Activated CD8-positive, alpha-beta T cell treated with anti-CD3 and anti-CD28 coated beads, Interleukin-2, amount 10 ng/mL, durations not matched to agents 7 days and 5 days (primary cell): ENCODE measurements at regions of chr1 and their contacts with region 1.

Region 1: DNA sequence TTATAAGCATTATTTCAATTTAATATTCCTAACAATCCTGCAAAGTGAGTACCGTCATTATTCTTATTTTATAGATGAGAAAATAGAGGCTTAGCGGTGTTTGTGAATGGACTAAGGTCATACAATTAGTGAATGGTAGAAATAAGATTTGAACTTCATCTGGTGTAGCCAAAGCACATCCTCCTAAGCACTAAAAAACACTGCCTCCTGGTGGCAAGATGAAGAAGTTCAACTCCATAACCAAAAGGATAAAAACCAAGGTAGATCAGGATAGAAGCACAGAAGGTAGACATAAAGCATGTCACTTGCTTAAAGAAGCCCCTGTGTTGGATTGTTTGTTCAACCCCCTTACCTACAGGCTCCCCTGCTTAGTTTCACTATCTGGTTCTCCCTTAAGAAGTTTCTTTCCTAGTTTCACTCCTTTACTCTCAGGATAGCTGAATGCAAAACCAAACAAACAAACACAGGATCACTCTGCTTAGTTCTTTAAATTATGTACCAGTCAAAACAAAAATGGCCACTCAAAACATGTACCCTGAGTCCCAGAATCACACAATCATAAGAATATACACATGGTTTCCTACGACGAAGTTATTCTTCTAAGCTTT is 12.7 kb upstream of the AIM2 start:
- DNase-seq: peak; percentile 32
- ATAC-seq: peak; percentile 41
- H3K4me3 Mint-ChIP-seq: no peak overlapping the region
- H3K27ac Mint-ChIP-seq: no peak overlapping the region
- H3K4me1 Mint-ChIP-seq: peaks cover 31% of the 10 kb centered on the region
- H3K27me3 Mint-ChIP-seq: peaks cover 3% of the 10 kb centered on the region

Region 2: GRCh38 chr1:159077120-159077961 is 11.9 kb before region 1 on chr1:
- CTCF ChIA-PET with region 1: interaction called, 55 read pairs
- POLR2A ChIA-PET with region 1: interaction called, 12 read pairs
- DNase-seq: peak; percentile 94
- ATAC-seq: peak; percentile 90
- H3K4me3 Mint-ChIP-seq: peak overlapping the region; percentile 75
- H3K27ac Mint-ChIP-seq: peak overlapping the region; percentile 97
- H3K4me1 Mint-ChIP-seq: peaks cover 21% of the 10 kb centered on the region
- H3K27me3 Mint-ChIP-seq: peaks cover 11% of the 10 kb centered on the region